Panc1 (cell line): ENCODE measurements at regions of chr11 and their contacts with region 1.

Region 1: GRCh38 chr11:62591448-62592145 is at the start of gene TUT1:
- DNase-seq: peak; percentile 95
- ATAC-seq: peak; percentile 94
- H3K4me3 ChIP-seq: peak within 1 kb of the TSS; percentile 74 to 86
- H3K27ac ChIP-seq: peak within 1 kb of the TSS; percentile 97
- H3K4me1 ChIP-seq: peaks cover 24% of the 10 kb centered on the region
- H3K27me3 ChIP-seq: no peaks in the 10 kb centered on the region
- CTCF ChIP-seq: no peak
- total RNA-seq, gene TUT1: 19.9 TPM

Region 2: GRCh38 chr11:62621567-62622470 is 30.2 kb after region 1 on chr11 and contains the start of gene B3GAT3:
- CTCF ChIA-PET with region 1: interaction called, 8 read pairs
- POLR2A ChIA-PET with region 1: interaction called, 14 read pairs
- in situ Hi-C with region 1: no loop called
- intact Hi-C with region 1: no loop called
- DNase-seq: peak; percentile 85
- ATAC-seq: peak; percentile 99
- H3K4me3 ChIP-seq: peak within 1 kb of the TSS; percentile 81 to 94
- H3K27ac ChIP-seq: peak within 1 kb of the TSS; percentile 98
- H3K4me1 ChIP-seq: peaks cover 14% of the 10 kb centered on the region
- H3K27me3 ChIP-seq: no peaks in the 10 kb centered on the region
- CTCF ChIP-seq: no peak
- total RNA-seq, gene B3GAT3: 68.2 TPM